ENCODE measurements at regions of chr14 and their contacts with region 1.

Region 1: DNA sequence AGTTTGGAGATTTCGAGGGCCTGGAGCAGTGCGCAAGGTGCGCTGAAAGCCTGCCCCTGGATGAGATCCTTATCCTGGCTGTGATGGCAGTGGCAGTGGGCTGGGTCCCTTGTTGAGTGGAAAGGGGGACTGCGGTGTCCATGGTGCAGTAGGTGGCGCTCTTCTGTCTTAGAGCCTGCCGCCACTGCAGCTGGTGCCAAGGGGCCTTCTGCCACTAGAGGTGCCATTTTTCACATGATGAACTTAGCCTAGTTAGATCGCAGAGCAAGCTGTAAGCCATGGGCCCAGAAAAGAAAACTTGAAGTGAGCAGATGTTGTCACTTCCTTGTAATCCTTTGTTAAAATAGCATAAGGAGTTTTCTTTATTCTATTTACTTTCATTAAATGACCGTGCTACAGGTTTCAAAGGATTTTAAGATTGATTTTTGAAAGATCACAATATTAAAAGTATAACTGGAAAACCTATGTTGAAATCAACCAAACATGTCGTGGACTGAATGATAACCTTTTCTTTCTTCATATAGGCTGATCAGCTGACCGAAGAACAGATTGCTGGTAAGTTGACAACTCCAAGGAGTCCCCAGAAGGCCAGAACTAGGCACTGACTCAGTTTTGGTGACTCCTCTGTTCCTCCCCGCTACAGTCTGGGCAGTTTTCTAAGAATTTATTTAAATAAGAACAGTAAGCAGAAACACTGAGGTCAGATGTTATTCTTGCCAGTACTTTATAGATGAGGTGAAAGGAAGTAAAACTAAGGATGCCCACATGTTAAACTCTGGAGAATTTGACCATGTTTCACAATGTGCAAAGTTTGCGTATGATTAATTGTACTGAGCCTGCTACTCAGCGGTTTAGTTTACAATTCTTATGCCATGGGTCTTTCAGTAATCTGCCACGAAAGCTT is 3.0 kb downstream of the CALM1 start:
- DNase-seq: peak; percentile 88
- ATAC-seq: peak; percentile 42
- H3K4me3 ChIP-seq: no peak overlapping the region
- H3K27ac ChIP-seq: no peak overlapping the region
- H3K4me1 ChIP-seq: peaks cover 4% of the 10 kb centered on the region
- H3K27me3 ChIP-seq: no peaks in the 10 kb centered on the region
- CTCF ChIP-seq: peak; percentile 100
- POLR2A ChIP-seq: no peak
- RAD21 ChIP-seq: peak; percentile 93

Region 2: DNA sequence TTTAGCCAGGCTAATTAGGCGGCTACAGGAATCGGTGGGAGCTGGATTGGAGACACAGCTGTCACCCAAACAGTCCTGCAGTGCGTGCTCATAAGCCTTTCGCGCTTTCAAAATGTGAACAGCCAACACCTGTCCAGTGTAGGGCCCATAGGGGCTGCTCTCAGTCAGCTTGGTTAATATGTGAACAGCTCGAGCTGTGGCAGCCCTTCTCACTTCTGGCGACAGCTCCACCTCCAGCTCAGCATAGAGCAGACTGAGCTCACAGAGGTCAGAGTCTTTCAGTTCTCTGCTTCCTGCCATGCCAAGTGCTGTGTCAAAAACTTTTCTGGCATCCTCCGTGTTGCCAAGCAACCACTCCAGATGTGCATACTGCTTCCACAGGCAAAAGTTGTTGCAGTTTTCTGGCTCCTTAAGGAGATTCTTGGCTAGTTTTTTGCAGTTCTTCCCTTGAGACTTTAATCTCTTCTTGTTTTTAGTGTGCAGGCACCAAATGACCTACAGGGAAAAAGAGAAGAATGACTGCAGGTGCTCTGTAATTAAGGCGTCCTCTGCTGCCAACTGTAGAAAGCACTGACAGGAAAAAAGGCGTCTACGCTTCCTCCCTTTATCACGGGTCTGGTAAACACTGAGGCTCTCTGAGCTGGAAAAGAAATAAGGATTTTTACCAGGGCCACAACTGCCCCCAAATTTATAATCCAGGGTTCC is 111.0 kb before region 1 on chr14:
- CTCF ChIA-PET with region 1: interaction called, 4 read pairs
- POLR2A ChIA-PET with region 1: no interaction called
- dilution Hi-C with region 1: no loop called
- in situ Hi-C with region 1: no loop called
- intact Hi-C with region 1: loop called (anchors 5 kb)
- DNase-seq: peak; percentile 25
- ATAC-seq: no peak; the same call in 1 of the 2 replicates
- H3K4me3 ChIP-seq: no peak overlapping the region
- H3K27ac ChIP-seq: no peak overlapping the region
- H3K4me1 ChIP-seq: no peaks in the 10 kb centered on the region
- H3K27me3 ChIP-seq: no peaks in the 10 kb centered on the region
- CTCF ChIP-seq: no peak
- POLR2A ChIP-seq: no peak
- RAD21 ChIP-seq: no peak

Region 3: GRCh38 chr14:90330203-90331196 is 69.3 kb before region 1 on chr14:
- CTCF ChIA-PET with region 1: no interaction called
- POLR2A ChIA-PET with region 1: no interaction called
- dilution Hi-C with region 1: no loop called
- in situ Hi-C with region 1: no loop called
- intact Hi-C with region 1: no loop called
- DNase-seq: no peak
- ATAC-seq: no peak
- H3K4me3 ChIP-seq: peak overlapping the region; percentile 71; the same call in 1 of the 2 replicates
- H3K27ac ChIP-seq: no peak overlapping the region
- H3K4me1 ChIP-seq: no peaks in the 10 kb centered on the region
- H3K27me3 ChIP-seq: no peaks in the 10 kb centered on the region; the same call in 1 of the 2 replicates
- CTCF ChIP-seq: no peak
- POLR2A ChIP-seq: no peak
- RAD21 ChIP-seq: no peak

Region 4: DNA sequence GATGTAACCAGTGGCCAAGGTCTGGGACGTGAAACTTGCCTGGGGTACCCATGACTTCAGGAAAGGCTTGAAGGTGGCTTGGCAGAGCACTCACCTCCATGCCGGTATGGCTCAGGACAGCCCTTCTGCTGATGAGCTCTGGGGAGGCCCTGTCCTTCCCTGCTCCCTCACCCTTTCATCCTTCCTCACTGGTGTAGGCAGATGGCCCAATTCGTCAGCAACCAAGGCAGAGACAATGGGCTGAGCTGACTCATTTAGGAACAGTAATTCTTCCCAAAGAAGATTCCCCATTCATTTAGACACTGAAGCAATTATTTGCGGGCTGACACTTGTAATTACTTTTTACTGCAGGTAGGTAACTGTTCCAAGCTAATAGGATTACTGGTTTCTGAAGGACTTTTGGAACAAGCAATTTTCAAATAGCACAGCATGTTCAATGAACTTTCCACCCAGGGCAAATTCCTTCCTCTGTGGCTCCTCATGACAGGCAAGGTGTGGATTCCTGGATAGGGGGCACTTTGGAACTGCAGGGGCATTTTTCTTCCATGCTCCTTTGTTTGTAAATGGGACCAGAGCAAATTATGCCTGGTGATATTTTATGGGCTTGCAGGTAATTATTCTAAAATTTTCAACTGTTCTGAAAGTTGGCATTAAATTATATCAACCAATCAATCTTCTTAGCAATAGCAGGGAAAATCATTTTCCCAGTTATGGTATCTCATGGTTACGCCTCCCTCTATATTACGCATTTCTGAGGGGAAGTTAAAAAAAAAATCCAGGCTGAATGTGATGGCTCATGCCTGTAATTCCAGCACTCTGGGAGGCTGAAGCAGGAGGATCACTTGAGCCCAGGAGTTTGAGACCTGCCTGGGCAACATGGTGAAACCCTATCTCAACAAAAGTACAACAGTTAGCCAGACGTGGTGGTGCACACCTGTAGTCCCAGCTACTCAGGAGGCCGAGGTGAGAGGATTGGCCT is 44.0 kb before region 1 on chr14:
- CTCF ChIA-PET with region 1: no interaction called
- POLR2A ChIA-PET with region 1: no interaction called
- dilution Hi-C with region 1: no loop called
- in situ Hi-C with region 1: no loop called
- intact Hi-C with region 1: no loop called
- DNase-seq: no peak
- ATAC-seq: no peak
- H3K4me3 ChIP-seq: no peak overlapping the region
- H3K27ac ChIP-seq: no peak overlapping the region
- H3K4me1 ChIP-seq: no peaks in the 10 kb centered on the region
- H3K27me3 ChIP-seq: peaks cover 8% of the 10 kb centered on the region
- CTCF ChIP-seq: no peak
- POLR2A ChIP-seq: no peak
- RAD21 ChIP-seq: no peak

Region 5: GRCh38 chr14:90383075-90383730 is 16.6 kb before region 1 on chr14:
- CTCF ChIA-PET with region 1: interaction called, 3 read pairs
- POLR2A ChIA-PET with region 1: interaction called, 3 read pairs
- dilution Hi-C with region 1: no loop called
- in situ Hi-C with region 1: no loop called
- intact Hi-C with region 1: loop called (anchors 1 kb)
- DNase-seq: peak; percentile 100
- ATAC-seq: peak; percentile 95
- H3K4me3 ChIP-seq: peak overlapping the region; percentile 68
- H3K27ac ChIP-seq: peak overlapping the region; percentile 92
- H3K4me1 ChIP-seq: peaks cover 13% of the 10 kb centered on the region
- H3K27me3 ChIP-seq: no peaks in the 10 kb centered on the region
- CTCF ChIP-seq: 0 out of 2 replicates have a peak, but pooled peaks have one; percentile 4
- POLR2A ChIP-seq: peak; percentile 93
- RAD21 ChIP-seq: no peak; the same call in 1 of the 2 replicates

Region 6: DNA sequence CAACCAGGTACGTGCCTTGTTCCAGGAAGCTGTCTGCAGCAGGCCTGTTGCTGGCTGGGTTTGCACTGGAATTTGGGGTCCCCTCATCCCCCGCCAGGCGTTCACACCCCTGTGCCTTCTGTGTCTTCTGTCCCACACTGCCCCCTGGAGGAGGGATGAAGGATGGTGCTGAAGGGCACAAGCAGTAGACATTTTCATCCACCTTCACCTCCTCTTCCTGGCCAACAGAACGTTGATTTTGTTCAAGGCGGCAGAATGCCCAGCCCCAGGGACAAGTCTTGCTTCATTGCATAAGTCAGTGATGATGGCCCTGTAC is 119.1 kb after region 1 on chr14:
- CTCF ChIA-PET with region 1: no interaction called
- POLR2A ChIA-PET with region 1: no interaction called
- dilution Hi-C with region 1: no loop called
- in situ Hi-C with region 1: no loop called
- intact Hi-C with region 1: loop called (anchors 1 kb)
- DNase-seq: peak; percentile 11
- ATAC-seq: no peak
- H3K4me3 ChIP-seq: no peak overlapping the region
- H3K27ac ChIP-seq: no peak overlapping the region
- H3K4me1 ChIP-seq: peaks cover 3% of the 10 kb centered on the region
- H3K27me3 ChIP-seq: peaks cover 14% of the 10 kb centered on the region; the same call in 1 of the 2 replicates
- CTCF ChIP-seq: peak; percentile 40; the same call in 1 of the 2 replicates
- POLR2A ChIP-seq: no peak
- RAD21 ChIP-seq: peak; percentile 40

Region 7: DNA sequence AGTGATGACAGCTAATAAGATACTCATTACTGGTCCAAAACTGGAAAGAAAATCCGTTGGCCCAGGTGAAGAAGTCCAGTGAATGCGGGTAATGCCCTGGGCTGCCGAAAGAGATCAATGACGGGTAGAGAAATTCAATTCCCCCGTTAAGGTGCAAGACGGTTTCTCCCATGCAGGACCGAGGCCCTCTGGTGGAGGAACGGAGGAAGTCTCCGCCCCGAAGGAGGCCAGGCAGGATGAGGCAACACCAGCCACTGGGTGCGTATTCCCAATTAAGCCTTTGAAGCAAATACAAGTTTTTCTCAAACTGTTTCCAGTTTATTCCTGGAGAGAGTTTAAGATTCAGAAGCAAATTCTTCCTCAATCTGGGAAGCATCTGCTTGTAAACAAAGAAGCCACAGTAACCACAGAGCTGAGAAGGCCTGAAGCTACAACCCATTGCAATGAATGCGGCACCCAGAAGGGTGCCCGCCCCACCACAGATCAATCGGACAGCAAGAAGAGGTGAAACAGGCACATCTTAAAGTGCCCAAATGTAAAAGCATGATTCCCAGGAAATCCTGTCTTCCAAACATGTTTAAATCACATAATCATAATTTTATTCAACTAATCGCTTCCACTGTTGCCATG is 297.9 kb after region 1 on chr14:
- CTCF ChIA-PET with region 1: interaction called, 10 read pairs
- POLR2A ChIA-PET with region 1: no interaction called
- dilution Hi-C with region 1: no loop called
- in situ Hi-C with region 1: loop called (anchors 10 kb)
- intact Hi-C with region 1: loop called (anchors 1 kb)
- DNase-seq: peak; percentile 72
- ATAC-seq: peak; percentile 90
- H3K4me3 ChIP-seq: no peak overlapping the region
- H3K27ac ChIP-seq: no peak overlapping the region
- H3K4me1 ChIP-seq: peaks cover 2% of the 10 kb centered on the region; the same call in 1 of the 2 replicates
- H3K27me3 ChIP-seq: no peaks in the 10 kb centered on the region
- CTCF ChIP-seq: peak; percentile 94
- POLR2A ChIP-seq: 0 out of 2 replicates have a peak, but pooled peaks have one; percentile 33
- RAD21 ChIP-seq: peak; percentile 94

Region 8: GRCh38 chr14:90758028-90758889 is 358.5 kb after region 1 on chr14:
- CTCF ChIA-PET with region 1: interaction called, 7 read pairs
- POLR2A ChIA-PET with region 1: no interaction called
- dilution Hi-C with region 1: no loop called
- in situ Hi-C with region 1: no loop called
- intact Hi-C with region 1: loop called (anchors 1 kb)
- DNase-seq: peak; percentile 85
- ATAC-seq: peak; percentile 97
- H3K4me3 ChIP-seq: peak overlapping the region; percentile 59
- H3K27ac ChIP-seq: peak overlapping the region; percentile 50
- H3K4me1 ChIP-seq: peaks cover 6% of the 10 kb centered on the region
- H3K27me3 ChIP-seq: no peaks in the 10 kb centered on the region
- CTCF ChIP-seq: peak; percentile 95
- POLR2A ChIP-seq: 0 out of 2 replicates have a peak, but pooled peaks have one; percentile 22
- RAD21 ChIP-seq: peak; percentile 78

Region 9: GRCh38 chr14:90903101-90903500 is 503.3 kb after region 1 on chr14:
- CTCF ChIA-PET with region 1: no interaction called
- POLR2A ChIA-PET with region 1: no interaction called
- dilution Hi-C with region 1: no loop called
- in situ Hi-C with region 1: no loop called
- intact Hi-C with region 1: loop called (anchors 2 kb)
- DNase-seq: peak; percentile 53
- ATAC-seq: peak; percentile 94
- H3K4me3 ChIP-seq: no peak overlapping the region
- H3K27ac ChIP-seq: no peak overlapping the region
- H3K4me1 ChIP-seq: no peaks in the 10 kb centered on the region
- H3K27me3 ChIP-seq: no peaks in the 10 kb centered on the region
- CTCF ChIP-seq: peak; percentile 78
- POLR2A ChIP-seq: no peak
- RAD21 ChIP-seq: peak; percentile 75